ENCODE measurements at regions of chr5 and their contacts with region 1.

Region 1: GRCh38 chr5:95620030-95620869 is at the start of gene GPR150:
- DNase-seq: peak; percentile 44 to 67 (median 61)
- ATAC-seq: peak; percentile 77
- H3K4me3 ChIP-seq: peak within 1 kb of the TSS; percentile 75
- H3K4me3 Mint-ChIP-seq: peak within 1 kb of the TSS; percentile 88 to 96 (median 92)
- H3K27ac ChIP-seq: peak within 1 kb of the TSS; percentile 71
- H3K27ac Mint-ChIP-seq: peak within 1 kb of the TSS; percentile 60 to 87 (median 81)
- H3K4me1 ChIP-seq: peaks cover 22 to 46% of the 10 kb centered on the region in 2 donors
- H3K4me1 Mint-ChIP-seq: peaks cover 34 to 82% (median 67%) of the 10 kb centered on the region in 7 donors
- H3K27me3 ChIP-seq: no peaks in the 10 kb centered on the region
- H3K27me3 Mint-ChIP-seq: peaks cover 0 to 18% (median 0%) of the 10 kb centered on the region in 5 donors
- total RNA-seq, gene GPR150: 0.48 to 1.5 (median 1.1) TPM

Region 2: DNA sequence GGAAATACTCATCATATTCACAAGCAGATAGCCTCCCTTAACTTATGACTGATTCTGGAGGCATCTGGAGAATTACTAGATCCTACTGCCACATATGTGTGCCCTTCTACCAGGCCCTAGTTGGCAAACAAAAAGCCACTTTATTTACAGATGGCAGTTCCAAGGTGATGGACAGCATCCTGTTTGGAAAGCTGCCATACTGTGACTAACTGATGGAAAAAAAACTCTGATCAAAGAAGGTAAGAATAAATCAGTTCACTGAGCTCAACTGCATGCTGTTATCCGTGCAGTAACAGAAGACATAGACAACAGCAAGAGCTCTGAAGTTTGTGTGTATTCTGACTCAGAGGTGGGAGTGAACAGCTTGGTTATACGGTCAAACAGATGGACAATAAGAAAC is 1599.0 kb before region 1 on chr5:
- CTCF ChIA-PET with region 1: no interaction called
- POLR2A ChIA-PET with region 1: no interaction called
- intact Hi-C with region 1: no loop called
- DNase-seq: no peak
- ATAC-seq: no peak
- H3K4me3 ChIP-seq: no peak overlapping the region
- H3K4me3 Mint-ChIP-seq: no peak overlapping the region
- H3K27ac ChIP-seq: no peak overlapping the region
- H3K27ac Mint-ChIP-seq: no peak overlapping the region
- H3K4me1 ChIP-seq: no peaks in the 10 kb centered on the region
- H3K4me1 Mint-ChIP-seq: peaks cover 0 to 3% (median 0%) of the 10 kb centered on the region in 7 donors
- H3K27me3 ChIP-seq: no peaks in the 10 kb centered on the region
- H3K27me3 Mint-ChIP-seq: no peaks in the 10 kb centered on the region

Region 3: DNA sequence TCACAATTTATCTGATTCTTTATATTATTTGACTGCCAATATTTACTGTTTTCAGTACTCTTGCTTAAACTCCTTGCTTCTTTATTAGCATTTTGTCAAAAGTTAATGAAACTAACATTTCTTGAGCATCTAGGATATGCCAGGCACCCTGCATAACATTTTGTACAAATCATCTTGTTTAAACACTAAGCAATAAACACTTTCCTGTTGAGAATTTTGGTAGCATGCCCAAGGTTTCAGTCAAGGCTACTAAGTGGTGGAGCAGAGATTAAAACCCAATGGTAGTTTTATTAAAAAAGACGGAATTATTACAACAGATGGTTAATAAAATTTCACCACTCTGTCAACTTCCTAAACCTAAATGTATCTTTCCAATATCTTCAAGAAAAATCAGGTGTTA is 108.6 kb before region 1 on chr5:
- CTCF ChIA-PET with region 1: no interaction called
- POLR2A ChIA-PET with region 1: no interaction called
- intact Hi-C with region 1: no loop called
- DNase-seq: no peak
- ATAC-seq: no peak
- H3K4me3 ChIP-seq: no peak overlapping the region
- H3K4me3 Mint-ChIP-seq: no peak overlapping the region
- H3K27ac ChIP-seq: no peak overlapping the region
- H3K27ac Mint-ChIP-seq: peak overlapping the region in 2 of 9 donors; percentile 9 to 33
- H3K4me1 ChIP-seq: no peaks in the 10 kb centered on the region
- H3K4me1 Mint-ChIP-seq: peaks cover 0 to 4% (median 0%) of the 10 kb centered on the region in 7 donors
- H3K27me3 ChIP-seq: no peaks in the 10 kb centered on the region
- H3K27me3 Mint-ChIP-seq: no peaks in the 10 kb centered on the region

Region 4: DNA sequence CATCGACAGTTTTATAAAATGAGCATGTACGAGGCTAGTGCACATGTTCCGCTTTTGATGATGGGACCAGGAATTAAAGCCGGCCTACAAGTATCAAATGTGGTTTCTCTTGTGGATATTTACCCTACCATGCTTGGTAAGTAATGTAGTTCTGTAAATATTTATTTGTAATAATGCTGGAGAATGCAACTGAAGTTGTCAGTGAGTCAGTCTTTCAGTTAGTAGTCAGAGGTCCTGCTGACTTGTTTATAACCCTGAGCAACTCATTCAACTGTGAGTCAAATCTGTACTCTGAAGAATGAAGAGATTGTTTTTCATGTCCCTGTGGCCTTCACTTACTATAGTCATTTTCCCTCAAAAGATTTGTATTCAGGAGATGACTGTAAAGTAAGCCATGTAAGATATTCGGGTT is 28.8 kb before region 1 on chr5:
- CTCF ChIA-PET with region 1: no interaction called
- POLR2A ChIA-PET with region 1: no interaction called
- intact Hi-C with region 1: loop called in 1 of 2 experiments (anchors 2 kb)
- DNase-seq: no peak
- ATAC-seq: no peak
- H3K4me3 ChIP-seq: no peak overlapping the region
- H3K4me3 Mint-ChIP-seq: no peak overlapping the region
- H3K27ac ChIP-seq: no peak overlapping the region
- H3K27ac Mint-ChIP-seq: no peak overlapping the region
- H3K4me1 ChIP-seq: peaks cover 0 to 10% of the 10 kb centered on the region in 2 donors
- H3K4me1 Mint-ChIP-seq: peaks cover 17 to 23% (median 22%) of the 10 kb centered on the region in 7 donors
- H3K27me3 ChIP-seq: no peaks in the 10 kb centered on the region
- H3K27me3 Mint-ChIP-seq: no peaks in the 10 kb centered on the region

Region 5: GRCh38 chr5:95605786-95606185 is 14.5 kb before region 1 on chr5:
- CTCF ChIA-PET with region 1: interaction called, 4 read pairs
- POLR2A ChIA-PET with region 1: interaction called, 7 read pairs
- intact Hi-C with region 1: loop called in 1 of 2 experiments (anchors 2 kb)
- DNase-seq: no peak
- ATAC-seq: no peak
- H3K4me3 ChIP-seq: no peak overlapping the region
- H3K4me3 Mint-ChIP-seq: no peak overlapping the region
- H3K27ac ChIP-seq: no peak overlapping the region
- H3K27ac Mint-ChIP-seq: peak overlapping the region in 1 of 9 donors; percentile 17
- H3K4me1 ChIP-seq: no peaks in the 10 kb centered on the region
- H3K4me1 Mint-ChIP-seq: peaks cover 0 to 5% (median 0%) of the 10 kb centered on the region in 7 donors
- H3K27me3 ChIP-seq: no peaks in the 10 kb centered on the region
- H3K27me3 Mint-ChIP-seq: no peaks in the 10 kb centered on the region

Region 6: GRCh38 chr5:95631991-95632675 is 11.9 kb after region 1 on chr5:
- CTCF ChIA-PET with region 1: interaction called, 14 read pairs
- POLR2A ChIA-PET with region 1: interaction called, 69 read pairs
- intact Hi-C with region 1: loop called (anchors 1 kb)
- DNase-seq: peak; percentile 27 to 86 (median 79)
- ATAC-seq: peak; percentile 98
- H3K4me3 ChIP-seq: peak overlapping the region; percentile 8
- H3K4me3 Mint-ChIP-seq: peak overlapping the region; percentile 21 to 79 (median 69)
- H3K27ac ChIP-seq: peak overlapping the region; percentile 65
- H3K27ac Mint-ChIP-seq: peak overlapping the region; percentile 90 to 99 (median 94)
- H3K4me1 ChIP-seq: peaks cover 6 to 24% of the 10 kb centered on the region in 2 donors
- H3K4me1 Mint-ChIP-seq: peaks cover 15 to 52% (median 35%) of the 10 kb centered on the region in 7 donors
- H3K27me3 ChIP-seq: no peaks in the 10 kb centered on the region
- H3K27me3 Mint-ChIP-seq: peaks cover 0 to 10% (median 0%) of the 10 kb centered on the region in 5 donors

Region 7: GRCh38 chr5:95682891-95683290 is 62.6 kb after region 1 on chr5 and contains the start of gene SPATA9:
- CTCF ChIA-PET with region 1: no interaction called
- POLR2A ChIA-PET with region 1: no interaction called
- intact Hi-C with region 1: no loop called
- DNase-seq: no peak
- ATAC-seq: no peak
- H3K4me3 ChIP-seq: no peak within 1 kb of the TSS
- H3K4me3 Mint-ChIP-seq: no peak within 1 kb of the TSS
- H3K27ac ChIP-seq: no peak within 1 kb of the TSS
- H3K27ac Mint-ChIP-seq: no peak within 1 kb of the TSS
- H3K4me1 ChIP-seq: no peaks in the 10 kb centered on the region
- H3K4me1 Mint-ChIP-seq: no peaks in the 10 kb centered on the region
- H3K27me3 ChIP-seq: no peaks in the 10 kb centered on the region
- H3K27me3 Mint-ChIP-seq: peaks cover 0 to 43% (median 5%) of the 10 kb centered on the region in 5 donors
- total RNA-seq, gene SPATA9: 0.66 TPM in 1 of 5 experiments, not detected in the others